ENCODE measurements at regions of chr12 and their contacts with region 1.

Region 1: DNA sequence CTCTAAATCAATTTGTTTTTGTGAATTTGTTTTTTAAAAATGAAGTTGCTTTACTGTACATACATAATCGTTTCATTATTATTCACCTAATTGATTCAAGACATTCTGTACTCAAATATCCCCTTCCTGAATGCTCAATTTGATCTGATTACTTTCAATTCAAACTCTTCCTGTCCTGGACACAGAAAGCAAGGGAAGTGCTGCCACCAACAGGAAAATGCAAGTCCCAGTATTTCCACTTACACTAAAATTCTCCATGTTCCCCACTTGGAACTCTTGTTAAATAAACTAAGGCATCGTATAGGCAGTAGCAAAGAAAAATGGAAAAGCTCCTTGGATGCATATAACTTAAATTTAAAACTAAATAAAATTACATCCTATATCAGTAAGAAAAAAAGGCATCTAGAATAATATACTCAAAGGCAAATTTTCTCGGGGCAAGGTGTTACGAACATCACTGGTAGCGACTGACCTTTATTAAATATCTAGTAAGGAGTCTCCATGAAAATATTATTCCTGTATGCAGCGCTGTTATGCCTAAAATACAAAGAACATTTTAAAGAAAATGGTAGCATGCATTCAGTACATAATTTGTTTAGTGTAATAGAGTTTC is 72.0 kb upstream of the DBX2 start:
- DNase-seq: peak; percentile 27
- H3K4me3 ChIP-seq: no peak overlapping the region
- H3K27ac ChIP-seq: no peak overlapping the region
- H3K4me1 ChIP-seq: no peaks in the 10 kb centered on the region
- H3K27me3 ChIP-seq: no peaks in the 10 kb centered on the region
- CTCF ChIP-seq: peak; percentile 44 to 68

Region 2: DNA sequence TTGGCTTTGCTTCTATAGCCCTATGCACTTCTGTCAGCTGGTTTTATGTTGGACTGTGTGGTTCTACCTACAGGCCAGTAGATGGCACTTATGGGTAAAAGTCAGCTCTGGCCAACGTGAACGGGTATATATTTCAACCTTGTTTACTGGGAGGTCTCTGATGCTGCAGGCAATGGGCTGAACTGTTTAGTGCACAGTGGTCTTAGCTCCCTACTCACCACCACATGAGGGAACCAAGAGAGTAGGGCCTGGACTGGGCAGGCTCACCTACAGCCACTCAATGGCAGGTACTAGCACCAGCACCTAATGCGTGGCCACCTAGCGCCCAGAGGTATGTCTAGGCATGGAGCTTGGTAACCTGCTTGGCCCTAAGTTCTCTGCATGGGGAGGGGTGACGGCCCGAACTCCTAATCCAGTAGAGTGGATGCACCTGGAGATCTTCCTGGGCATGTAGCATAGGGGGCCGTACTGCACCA is 805.2 kb before region 1 on chr12:
- CTCF ChIA-PET with region 1: no interaction called
- dilution Hi-C with region 1: no loop called
- in situ Hi-C with region 1: no loop called
- intact Hi-C with region 1: loop called (anchors 5 kb)
- DNase-seq: no peak
- H3K4me3 ChIP-seq: no peak overlapping the region
- H3K27ac ChIP-seq: no peak overlapping the region
- H3K4me1 ChIP-seq: peaks cover 8% of the 10 kb centered on the region
- H3K27me3 ChIP-seq: no peaks in the 10 kb centered on the region
- CTCF ChIP-seq: peak; percentile 35 to 62

Region 3: GRCh38 chr12:44972746-44973421 is 150.0 kb before region 1 on chr12:
- CTCF ChIA-PET with region 1: no interaction called
- dilution Hi-C with region 1: no loop called
- in situ Hi-C with region 1: loop called in 1 of 2 experiments (anchors 25 kb)
- intact Hi-C with region 1: loop called (anchors 1 kb)
- DNase-seq: peak; percentile 9
- H3K4me3 ChIP-seq: no peak overlapping the region
- H3K27ac ChIP-seq: no peak overlapping the region
- H3K4me1 ChIP-seq: no peaks in the 10 kb centered on the region
- H3K27me3 ChIP-seq: peaks cover 3% of the 10 kb centered on the region
- CTCF ChIP-seq: peak; percentile 50 to 72

Measured in mammary epithelial cell (primary cell).